ENCODE measurements at regions of chr1 and their contacts with region 1.

Region 1: GRCh38 chr1:226062558-226063223 is at the start of gene H3-3A:
- DNase-seq: peak; percentile 77
- H3K4me3 ChIP-seq: peak within 1 kb of the TSS; percentile 85
- H3K27ac ChIP-seq: peak within 1 kb of the TSS; percentile 99
- H3K27me3 ChIP-seq: no peaks in the 10 kb centered on the region
- CTCF ChIP-seq: 0 out of 2 replicates have a peak, but pooled peaks have one; percentile 11
- polyA plus RNA-seq, gene H3-3A: 260 and 330 TPM in 2 replicates

Region 2: DNA sequence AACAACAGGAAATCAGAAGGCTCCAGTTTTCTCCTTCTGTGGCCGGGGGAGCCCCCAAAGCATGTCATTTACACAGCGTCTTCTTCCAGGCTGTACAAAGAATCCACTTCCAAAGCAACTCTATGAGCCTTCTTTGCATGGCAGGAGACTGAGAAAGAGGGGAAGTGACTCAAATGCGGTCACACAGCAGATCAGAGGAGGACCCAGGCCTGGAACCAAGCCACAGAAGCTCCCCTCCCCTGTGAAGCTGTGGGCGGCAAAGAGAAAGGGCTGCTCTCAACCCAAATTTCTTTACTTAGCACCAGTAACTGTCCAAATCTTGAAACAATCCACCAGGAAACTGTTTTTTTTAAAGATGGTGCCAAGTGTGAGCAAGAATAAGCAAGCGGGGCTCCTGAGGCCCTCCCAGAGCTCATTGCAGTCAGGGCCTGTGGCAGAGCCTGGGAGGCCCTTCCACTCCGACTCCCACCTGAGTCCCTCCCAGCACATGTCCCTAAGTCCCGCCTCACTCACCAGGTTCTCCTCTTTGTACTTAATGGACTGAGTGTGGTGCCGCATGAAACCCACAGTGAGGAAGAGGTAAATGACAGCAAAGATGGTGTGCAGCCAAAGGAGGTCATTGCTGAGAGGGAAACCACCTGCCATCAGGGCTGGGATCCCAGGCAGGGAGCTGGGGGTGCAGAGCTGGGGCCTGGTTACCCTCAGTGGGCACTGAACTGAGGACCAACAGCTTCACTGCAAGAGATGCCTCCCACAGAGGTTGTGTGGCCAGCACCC is 196.4 kb before region 1 on chr1:
- CTCF ChIA-PET with region 1: no interaction called
- POLR2A ChIA-PET with region 1: no interaction called
- DNase-seq: peak; percentile 30
- H3K4me3 ChIP-seq: no peak overlapping the region
- H3K27ac ChIP-seq: peak overlapping the region; percentile 57
- H3K27me3 ChIP-seq: no peaks in the 10 kb centered on the region
- CTCF ChIP-seq: no peak

Region 3: DNA sequence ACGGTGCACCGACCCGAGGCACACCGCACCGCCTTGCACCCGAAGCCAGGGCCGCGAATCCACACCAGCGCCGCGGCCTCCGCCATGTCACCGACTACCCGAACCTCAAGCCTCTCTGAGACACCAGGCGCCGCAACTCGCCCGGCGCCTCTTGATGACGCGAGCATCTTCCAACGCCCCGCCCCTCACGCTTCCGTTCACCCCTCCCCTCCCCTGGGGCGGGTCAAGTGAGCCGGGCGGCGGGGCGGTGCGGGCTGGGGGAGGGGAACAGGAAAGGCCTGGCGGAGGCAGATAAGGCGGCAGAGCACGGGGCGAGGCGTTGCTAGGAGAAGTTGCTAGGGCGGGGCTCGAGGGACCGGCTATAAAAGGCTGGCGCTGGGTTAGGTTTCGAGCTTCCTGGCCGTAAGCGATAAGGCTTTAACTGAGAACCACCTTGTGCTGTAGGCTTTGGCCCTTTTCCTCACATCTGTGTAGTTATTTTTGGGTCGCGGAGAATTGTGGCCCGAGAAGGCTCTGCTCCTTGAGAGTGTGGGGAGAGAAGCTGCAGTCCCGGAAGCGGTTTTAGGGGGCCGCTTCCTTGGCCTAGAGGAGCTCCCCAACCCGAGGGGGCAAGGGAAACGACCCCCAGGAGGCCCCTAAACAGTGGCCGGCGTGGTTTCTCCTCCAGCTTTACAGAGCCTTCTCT is 63.3 kb before region 1 on chr1 and contains the start of gene SDE2:
- CTCF ChIA-PET with region 1: interaction called, 9 read pairs
- POLR2A ChIA-PET with region 1: interaction called, 40 read pairs
- DNase-seq: peak; percentile 97
- H3K4me3 ChIP-seq: peak within 1 kb of the TSS; percentile 94
- H3K27ac ChIP-seq: peak within 1 kb of the TSS; percentile 82
- H3K27me3 ChIP-seq: peaks cover 2% of the 10 kb centered on the region
- CTCF ChIP-seq: no peak
- polyA plus RNA-seq, gene SDE2: 12.7 and 15.9 TPM in 2 replicates

Region 4: DNA sequence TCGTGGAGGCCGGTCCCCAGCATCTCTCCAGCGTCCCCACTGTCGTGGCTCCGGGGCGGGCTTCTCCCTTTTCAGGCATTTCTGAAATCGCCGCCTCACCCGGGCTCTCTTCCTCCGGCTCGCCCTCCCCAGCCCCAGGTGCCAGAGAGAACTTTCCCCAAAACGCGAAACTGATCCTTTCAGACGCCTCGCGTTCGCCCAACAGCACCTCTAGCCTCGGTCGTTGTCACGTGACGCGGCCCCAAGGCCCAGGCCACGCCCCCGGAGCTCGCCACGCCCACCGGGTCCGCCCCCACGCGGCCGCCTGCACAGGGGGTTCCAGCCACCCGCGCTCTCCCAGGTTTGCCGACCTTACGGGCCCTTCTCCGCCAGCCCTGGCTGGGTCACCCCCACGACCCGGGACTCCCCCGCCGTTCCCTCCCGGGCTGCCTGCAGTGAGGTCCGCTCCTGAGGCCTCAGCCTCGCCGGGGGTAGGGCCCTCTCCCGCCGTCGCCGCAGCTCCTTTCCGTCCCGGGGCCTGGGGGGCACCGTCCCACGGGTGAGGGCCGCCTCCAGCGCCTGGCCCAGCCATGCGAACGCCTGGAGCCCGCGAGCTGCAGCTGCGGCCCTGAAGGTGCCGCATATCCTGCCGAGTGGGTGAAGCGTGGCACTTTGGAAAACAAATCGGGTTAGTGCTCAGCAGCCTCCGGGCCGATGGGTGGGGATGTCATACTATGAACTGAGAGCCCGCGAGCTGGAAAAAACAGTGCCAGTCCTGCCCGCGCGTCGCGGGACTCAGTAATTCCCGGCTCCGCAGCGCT is 20.8 kb after region 1 on chr1:
- CTCF ChIA-PET with region 1: interaction called, 59 read pairs
- POLR2A ChIA-PET with region 1: interaction called, 35 read pairs
- DNase-seq: no peak
- H3K4me3 ChIP-seq: peak overlapping the region; percentile 68
- H3K27ac ChIP-seq: peak overlapping the region; percentile 61
- H3K27me3 ChIP-seq: no peaks in the 10 kb centered on the region
- CTCF ChIP-seq: no peak

Region 5: DNA sequence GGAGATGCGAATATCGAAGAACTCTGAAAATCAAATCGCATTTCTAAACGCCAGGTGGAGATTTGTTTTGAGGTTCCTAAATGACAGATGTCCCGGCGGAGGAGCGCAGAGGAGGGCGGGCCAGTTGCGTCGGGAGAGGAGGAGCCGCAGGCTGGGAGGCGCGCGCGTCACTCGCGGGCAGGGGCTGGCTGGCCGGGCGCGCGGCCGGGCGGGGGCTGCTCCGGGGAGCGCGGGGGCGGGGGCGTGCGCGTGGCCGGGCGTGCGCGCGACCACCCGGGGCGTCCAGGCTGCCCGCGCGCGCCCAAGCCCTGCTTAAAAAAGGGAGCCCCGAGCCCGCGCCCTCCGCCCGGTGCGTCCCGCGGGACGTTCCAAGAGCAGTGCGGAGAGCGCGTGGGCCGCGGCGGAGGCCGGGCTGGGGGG is 47.1 kb after region 1 on chr1:
- CTCF ChIA-PET with region 1: interaction called, 20 read pairs
- POLR2A ChIA-PET with region 1: interaction called, 15 read pairs
- DNase-seq: no peak
- H3K4me3 ChIP-seq: peak overlapping the region; percentile 59
- H3K27ac ChIP-seq: peak overlapping the region; percentile 65
- H3K27me3 ChIP-seq: no peaks in the 10 kb centered on the region
- CTCF ChIP-seq: no peak

Region 6: DNA sequence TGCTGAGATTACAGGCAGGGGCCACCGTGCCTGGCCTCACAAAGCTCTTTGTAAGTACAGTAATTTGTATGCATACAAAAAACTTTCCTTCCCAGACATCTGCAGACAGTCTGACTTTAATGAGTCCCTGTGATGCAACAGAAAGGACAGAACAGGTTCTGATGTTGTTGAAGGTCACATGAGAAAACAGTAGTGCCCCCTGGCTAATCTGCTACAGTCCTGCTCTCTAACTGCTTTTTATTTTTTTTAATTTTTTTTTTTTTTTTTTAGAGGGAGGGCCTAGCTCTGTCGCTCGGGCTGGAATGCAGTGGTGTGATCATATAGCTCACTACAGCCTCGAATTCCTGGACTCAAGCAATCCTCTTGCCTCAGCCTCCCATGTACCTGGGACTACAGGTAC is 87.1 kb after region 1 on chr1:
- CTCF ChIA-PET with region 1: interaction called, 11 read pairs
- POLR2A ChIA-PET with region 1: no interaction called
- DNase-seq: no peak
- H3K4me3 ChIP-seq: no peak overlapping the region
- H3K27ac ChIP-seq: no peak overlapping the region
- H3K27me3 ChIP-seq: no peaks in the 10 kb centered on the region
- CTCF ChIP-seq: 0 out of 2 replicates have a peak, but pooled peaks have one; percentile 24